ENCODE measurements at regions of chr14 and their contacts with region 1.

Region 1: DNA sequence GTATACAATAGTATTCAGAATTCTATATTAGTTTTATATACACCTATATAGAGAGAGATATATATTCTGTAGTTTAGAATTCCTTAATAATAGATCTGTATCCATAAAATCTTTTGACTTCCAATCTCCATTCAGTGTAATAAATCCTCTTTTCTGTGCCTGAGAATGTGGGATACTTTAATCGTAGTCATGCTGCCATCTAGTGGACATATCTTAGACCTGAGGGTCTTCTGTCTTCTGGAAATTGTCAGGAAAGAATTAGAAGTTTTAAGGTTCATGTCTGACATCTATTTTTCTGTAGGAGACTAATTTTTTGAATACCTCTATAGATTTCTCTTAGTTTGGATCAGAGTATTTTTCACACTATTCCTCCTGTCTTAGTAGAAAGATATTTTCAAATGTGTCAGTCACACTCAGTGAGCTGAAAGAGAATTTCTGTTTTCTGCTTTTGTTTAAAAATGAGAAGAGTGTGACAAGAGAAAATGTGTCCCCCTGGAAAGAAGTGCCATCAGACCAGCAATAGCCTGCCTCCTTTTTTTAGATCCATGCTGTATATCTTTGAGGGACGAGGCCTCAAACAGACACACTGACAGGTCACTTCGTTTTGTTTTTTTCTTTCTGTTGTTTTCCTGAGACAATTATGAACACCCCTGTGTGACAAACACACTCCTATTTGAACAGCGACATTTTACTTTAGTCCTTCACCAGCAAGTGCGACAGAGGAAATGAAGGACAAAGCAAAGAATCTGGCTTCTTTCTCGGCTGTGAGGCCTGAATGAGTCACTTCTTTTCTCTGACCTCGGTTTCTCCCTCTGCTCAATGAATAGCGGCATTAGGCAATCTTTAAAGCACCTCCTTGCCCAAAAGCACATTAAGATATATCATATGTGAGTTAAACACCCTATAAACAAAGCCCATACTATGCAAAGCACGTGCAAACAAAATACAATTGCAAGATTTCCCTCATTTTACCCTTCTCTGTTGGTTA is 96.3 kb downstream of the GALC start:
- H3K4me3 ChIP-seq: no peak overlapping the region
- H3K27ac ChIP-seq: no peak overlapping the region
- H3K4me1 ChIP-seq: no peaks in the 10 kb centered on the region
- CTCF ChIP-seq: no peak

Region 2: GRCh38 chr14:87679866-87680265 is 216.8 kb before region 1 on chr14:
- CTCF ChIA-PET with region 1: no interaction called
- POLR2A ChIA-PET with region 1: no interaction called
- H3K4me3 ChIP-seq: no peak overlapping the region
- H3K27ac ChIP-seq: no peak overlapping the region
- H3K4me1 ChIP-seq: no peaks in the 10 kb centered on the region
- CTCF ChIP-seq: no peak

Region 3: DNA sequence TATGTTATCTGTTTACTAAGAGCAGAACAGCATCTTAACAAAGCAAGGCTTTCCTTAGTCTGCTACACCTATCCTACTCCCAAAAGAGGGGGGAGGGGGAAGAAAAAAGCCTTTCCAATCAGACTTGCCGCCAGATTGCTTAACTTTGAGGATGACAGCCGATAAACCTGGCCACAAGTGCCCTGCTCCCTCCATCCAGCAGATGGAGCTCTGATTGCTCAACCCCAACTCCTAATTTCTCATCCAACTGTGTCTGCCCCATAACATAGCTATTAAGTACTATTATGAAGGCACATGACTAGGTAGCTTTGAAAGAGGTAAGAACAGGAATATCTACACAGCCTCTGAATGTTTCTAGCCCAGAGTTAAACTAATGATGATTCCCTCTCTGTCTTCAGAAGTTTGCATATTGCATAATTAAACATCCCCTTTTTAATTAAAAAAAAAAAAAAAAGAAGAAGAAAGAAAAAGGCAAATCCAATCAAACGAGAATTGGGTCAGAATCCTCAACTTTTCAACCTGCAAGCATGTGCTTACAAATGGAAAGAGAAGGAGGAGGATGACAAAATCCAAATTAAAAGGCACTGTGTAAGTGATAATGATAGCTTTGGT is 151.1 kb before region 1 on chr14:
- CTCF ChIA-PET with region 1: interaction called, 12 read pairs
- POLR2A ChIA-PET with region 1: no interaction called
- H3K4me3 ChIP-seq: no peak overlapping the region
- H3K27ac ChIP-seq: no peak overlapping the region
- H3K4me1 ChIP-seq: no peaks in the 10 kb centered on the region
- CTCF ChIP-seq: no peak

Region 4: GRCh38 chr14:87805315-87805723 is 91.4 kb before region 1 on chr14:
- CTCF ChIA-PET with region 1: interaction called, 82 read pairs
- POLR2A ChIA-PET with region 1: no interaction called
- H3K4me3 ChIP-seq: no peak overlapping the region
- H3K27ac ChIP-seq: no peak overlapping the region
- H3K4me1 ChIP-seq: no peaks in the 10 kb centered on the region
- CTCF ChIP-seq: 0 out of 2 replicates have a peak, but pooled peaks have one; percentile 16

Region 5: GRCh38 chr14:87879389-87879788 is 17.3 kb before region 1 on chr14:
- CTCF ChIA-PET with region 1: no interaction called
- POLR2A ChIA-PET with region 1: no interaction called
- H3K4me3 ChIP-seq: no peak overlapping the region
- H3K27ac ChIP-seq: no peak overlapping the region
- H3K4me1 ChIP-seq: no peaks in the 10 kb centered on the region
- CTCF ChIP-seq: no peak